ENCODE measurements at regions of chr4 and their contacts with region 1.

Region 1: GRCh38 chr4:112726031-112726430 is 89.1 kb downstream of the LARP7 start:
- DNase-seq: no peak
- ATAC-seq: no peak
- H3K4me3 Mint-ChIP-seq: no peak overlapping the region
- H3K27ac Mint-ChIP-seq: peak overlapping the region; percentile 82
- H3K4me1 Mint-ChIP-seq: peaks cover 45% of the 10 kb centered on the region
- H3K27me3 Mint-ChIP-seq: no peaks in the 10 kb centered on the region
- CTCF ChIP-seq: no peak

Region 2: DNA sequence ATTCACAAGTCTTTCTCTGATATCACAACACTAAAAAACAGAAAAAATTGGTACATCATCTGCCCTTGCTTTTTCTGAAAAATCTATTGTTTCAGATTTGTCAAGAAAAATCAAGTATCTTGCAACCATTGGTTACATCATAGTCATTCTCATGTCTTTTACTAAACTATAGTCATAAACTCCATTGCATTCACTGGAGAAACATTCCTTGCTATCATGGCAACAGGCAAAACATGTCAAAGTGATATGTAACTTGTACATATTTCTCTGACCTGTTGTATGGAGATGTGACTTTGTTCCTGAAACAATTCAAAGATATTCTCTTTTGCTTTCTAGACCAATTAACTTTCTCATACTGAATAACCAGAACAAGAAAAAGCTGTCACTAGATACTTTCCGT is 201.5 kb after region 1 on chr4:
- CTCF ChIA-PET with region 1: no interaction called
- POLR2A ChIA-PET with region 1: interaction called, 10 read pairs
- DNase-seq: no peak
- ATAC-seq: no peak
- H3K4me3 Mint-ChIP-seq: no peak overlapping the region
- H3K27ac Mint-ChIP-seq: no peak overlapping the region
- H3K4me1 Mint-ChIP-seq: no peaks in the 10 kb centered on the region
- H3K27me3 Mint-ChIP-seq: no peaks in the 10 kb centered on the region
- CTCF ChIP-seq: no peak